MCF 10A (cell line): ENCODE measurements at regions of chr16 and their contacts with region 1.

Region 1: GRCh38 chr16:22641131-22641628 is 130.5 kb downstream of the NPIPB5 start:
- DNase-seq: peak; percentile 72
- H3K4me3 Mint-ChIP-seq: no peak overlapping the region
- H3K27ac Mint-ChIP-seq: no peak overlapping the region
- H3K4me1 Mint-ChIP-seq: no peaks in the 10 kb centered on the region
- H3K27me3 Mint-ChIP-seq: no peaks in the 10 kb centered on the region
- CTCF ChIP-seq: no peak

Region 2: DNA sequence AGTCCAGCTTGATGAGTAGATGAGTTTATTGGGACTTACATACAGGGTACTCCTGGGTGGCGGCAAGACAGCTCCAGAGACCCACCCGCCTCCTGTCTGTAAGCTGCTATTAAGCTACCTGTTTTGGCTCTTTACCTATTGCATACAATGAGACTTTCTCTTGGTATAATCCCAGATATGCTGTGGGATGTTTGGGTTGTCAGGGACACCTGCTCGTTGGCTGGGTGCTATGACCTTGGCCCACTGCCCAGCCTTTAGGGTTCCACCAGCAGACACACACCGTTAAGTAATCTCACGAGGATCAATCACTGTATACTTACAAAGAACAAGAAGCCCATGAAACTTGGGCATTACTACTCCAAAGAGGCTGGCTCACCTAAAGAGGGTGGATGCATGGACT is 14.1 kb before region 1 on chr16:
- CTCF ChIA-PET with region 1: interaction called, 10 read pairs
- POLR2A ChIA-PET with region 1: interaction called, 9 read pairs
- intact Hi-C with region 1: no loop called
- DNase-seq: no peak
- H3K4me3 Mint-ChIP-seq: no peak overlapping the region
- H3K27ac Mint-ChIP-seq: no peak overlapping the region
- H3K4me1 Mint-ChIP-seq: no peaks in the 10 kb centered on the region
- H3K27me3 Mint-ChIP-seq: no peaks in the 10 kb centered on the region
- CTCF ChIP-seq: no peak